IMR-90 (cell line): ENCODE measurements at regions of chr4 and their contacts with region 1.

Region 1: GRCh38 chr4:118034053-118034785 is at the start of gene NDST3:
- DNase-seq: peak; percentile 31
- ATAC-seq: peak; percentile 28
- H3K4me3 ChIP-seq: peak within 1 kb of the TSS; percentile 44
- H3K27ac ChIP-seq: no peak within 1 kb of the TSS
- H3K4me1 ChIP-seq: no peaks in the 10 kb centered on the region
- H3K27me3 ChIP-seq: 0 out of 2 replicates have a peak, but pooled peaks cover 2% of the 10 kb centered on the region
- CTCF ChIP-seq: peak; percentile 29; the same call in 1 of the 2 replicates
- POLR2A ChIP-seq: no peak
- RAD21 ChIP-seq: peak; percentile 50
- total RNA-seq, gene NDST3: under 0.01 and 0.18 TPM in 2 replicates

Region 2: GRCh38 chr4:117549524-117549923 is 484.7 kb before region 1 on chr4:
- CTCF ChIA-PET with region 1: no interaction called
- POLR2A ChIA-PET with region 1: interaction called, 11 read pairs
- dilution Hi-C with region 1: no loop called
- in situ Hi-C with region 1: no loop called
- intact Hi-C with region 1: no loop called
- DNase-seq: no peak
- ATAC-seq: no peak
- H3K4me3 ChIP-seq: no peak overlapping the region
- H3K27ac ChIP-seq: no peak overlapping the region
- H3K4me1 ChIP-seq: no peaks in the 10 kb centered on the region
- H3K27me3 ChIP-seq: no peaks in the 10 kb centered on the region
- CTCF ChIP-seq: no peak
- POLR2A ChIP-seq: no peak
- RAD21 ChIP-seq: no peak